ENCODE measurements at regions of chr13 and their contacts with region 1.

Region 1: GRCh38 chr13:32650705-32651311 is 64.6 kb downstream of the PDS5B start:
- DNase-seq: peak; percentile 78 to 83 (median 82)
- H3K4me3 ChIP-seq: no peak overlapping the region
- H3K27ac ChIP-seq: no peak overlapping the region
- H3K4me1 ChIP-seq: peaks cover 0 to 11% (median 7%) of the 10 kb centered on the region in 4 experiments
- H3K27me3 ChIP-seq: no peaks in the 10 kb centered on the region

Region 2: GRCh38 chr13:32586080-32586900 is 64.5 kb before region 1 on chr13 and contains the start of gene PDS5B:
- CTCF ChIA-PET with region 1: interaction called, 10 read pairs
- POLR2A ChIA-PET with region 1: interaction called, 3 read pairs
- DNase-seq: peak; percentile 94 to 97 (median 97)
- H3K4me3 ChIP-seq: peak within 1 kb of the TSS; percentile 92 to 99 (median 97)
- H3K27ac ChIP-seq: peak within 1 kb of the TSS; percentile 78 to 89
- H3K4me1 ChIP-seq: peaks cover 9 to 31% (median 19%) of the 10 kb centered on the region in 4 experiments
- H3K27me3 ChIP-seq: no peaks in the 10 kb centered on the region

Region 3: DNA sequence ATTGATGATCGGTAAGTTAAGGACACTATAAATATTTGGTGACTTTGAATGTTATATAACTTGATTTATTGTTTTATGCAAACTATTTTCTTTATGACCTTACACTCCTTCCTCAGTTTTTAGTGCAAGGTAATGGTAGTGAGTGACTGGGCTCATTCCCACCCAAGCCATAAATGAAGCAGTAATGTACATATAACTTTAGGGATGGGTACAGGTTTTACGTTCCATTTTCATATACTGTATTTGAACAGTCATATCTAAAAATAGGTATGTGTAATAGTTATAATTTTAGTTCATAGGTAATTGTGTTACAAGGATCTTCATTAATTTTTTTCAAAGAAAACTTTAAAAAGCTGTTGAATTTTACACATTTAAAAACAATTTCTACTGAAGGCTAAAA is 36.5 kb after region 1 on chr13:
- CTCF ChIA-PET with region 1: no interaction called
- POLR2A ChIA-PET with region 1: no interaction called
- DNase-seq: no peak
- H3K4me3 ChIP-seq: no peak overlapping the region
- H3K27ac ChIP-seq: no peak overlapping the region
- H3K4me1 ChIP-seq: no peaks in the 10 kb centered on the region
- H3K27me3 ChIP-seq: no peaks in the 10 kb centered on the region